Panc1 (cell line): ENCODE measurements at regions of chr11 and their contacts with region 1.

Region 1: GRCh38 chr11:31987118-31988005 is 103.5 kb upstream of the RCN1 start:
- DNase-seq: no peak
- ATAC-seq: no peak
- H3K4me3 ChIP-seq: no peak overlapping the region
- H3K27ac ChIP-seq: no peak overlapping the region
- H3K4me1 ChIP-seq: no peaks in the 10 kb centered on the region
- H3K27me3 ChIP-seq: no peaks in the 10 kb centered on the region
- CTCF ChIP-seq: no peak

Region 2: DNA sequence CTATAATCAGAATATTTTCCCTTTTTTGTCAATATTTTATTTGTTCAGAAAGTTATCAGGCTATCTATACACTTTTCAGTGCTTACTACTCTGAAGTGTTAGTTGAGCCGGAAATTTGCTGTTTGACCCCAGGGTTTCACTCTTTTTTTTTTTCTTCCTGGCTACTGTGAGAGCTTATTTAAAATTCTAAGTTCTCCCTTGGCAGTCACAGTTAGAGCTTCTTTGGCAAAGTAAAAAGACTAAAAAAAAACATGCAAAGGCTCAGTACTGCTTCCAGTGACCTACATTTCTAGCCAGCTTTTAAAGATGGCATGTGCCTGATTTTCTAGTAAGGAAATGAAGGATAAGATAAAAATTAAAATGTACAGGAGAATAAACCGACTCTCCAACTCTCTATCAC is 429.4 kb before region 1 on chr11:
- CTCF ChIA-PET with region 1: no interaction called
- POLR2A ChIA-PET with region 1: interaction called, 10 read pairs
- in situ Hi-C with region 1: no loop called
- intact Hi-C with region 1: no loop called
- DNase-seq: no peak
- ATAC-seq: no peak
- H3K4me3 ChIP-seq: no peak overlapping the region
- H3K27ac ChIP-seq: no peak overlapping the region
- H3K4me1 ChIP-seq: no peaks in the 10 kb centered on the region
- H3K27me3 ChIP-seq: no peaks in the 10 kb centered on the region
- CTCF ChIP-seq: no peak

Region 3: GRCh38 chr11:31844351-31844750 is 143.0 kb before region 1 on chr11:
- CTCF ChIA-PET with region 1: interaction called, 15 read pairs
- POLR2A ChIA-PET with region 1: no interaction called
- in situ Hi-C with region 1: no loop called
- intact Hi-C with region 1: no loop called
- DNase-seq: no peak
- ATAC-seq: no peak
- H3K4me3 ChIP-seq: no peak overlapping the region
- H3K27ac ChIP-seq: no peak overlapping the region
- H3K4me1 ChIP-seq: no peaks in the 10 kb centered on the region
- H3K27me3 ChIP-seq: peaks cover 3% of the 10 kb centered on the region; the same call in 1 of the 2 replicates
- CTCF ChIP-seq: no peak